ENCODE measurements at regions of chr1 and their contacts with region 1.

Region 1: GRCh38 chr1:201468844-201469511 is at the start of gene PHLDA3:
- DNase-seq: peak; percentile 85
- H3K4me3 ChIP-seq: peak within 1 kb of the TSS; percentile 99
- H3K27ac ChIP-seq: peak within 1 kb of the TSS; percentile 75
- H3K27me3 ChIP-seq: no peaks in the 10 kb centered on the region
- CTCF ChIP-seq: no peak
- polyA plus RNA-seq, gene PHLDA3: 58.9 and 73.9 TPM in 2 replicates

Region 2: DNA sequence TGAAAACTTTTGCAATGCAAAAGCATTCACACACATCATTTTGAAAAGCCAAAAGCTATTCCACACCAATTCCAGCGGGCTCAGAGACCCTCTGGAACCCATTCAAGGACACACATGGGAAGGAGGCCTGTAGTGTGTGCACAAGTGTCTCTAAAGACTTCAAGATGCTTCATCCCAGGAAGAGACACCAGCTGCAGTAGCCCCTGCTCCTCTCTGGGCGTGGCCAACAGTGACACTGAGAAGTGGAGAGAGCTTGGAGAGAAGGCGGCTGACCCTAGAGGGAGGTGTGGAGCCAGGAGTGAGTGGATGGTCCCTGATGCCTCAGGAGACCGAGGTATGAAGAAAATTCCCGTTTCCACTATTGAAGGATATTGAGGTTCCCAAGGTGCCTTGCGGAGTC is 32.6 kb before region 1 on chr1:
- CTCF ChIA-PET with region 1: interaction called, 4 read pairs
- POLR2A ChIA-PET with region 1: interaction called, 18 read pairs
- DNase-seq: no peak
- H3K4me3 ChIP-seq: no peak overlapping the region
- H3K27ac ChIP-seq: no peak overlapping the region
- H3K27me3 ChIP-seq: peaks cover 4% of the 10 kb centered on the region
- CTCF ChIP-seq: peak; percentile 36

Region 3: GRCh38 chr1:201447911-201448871 is 20.8 kb before region 1 on chr1:
- CTCF ChIA-PET with region 1: interaction called, 14 read pairs
- POLR2A ChIA-PET with region 1: interaction called, 17 read pairs
- DNase-seq: peak; percentile 33
- H3K4me3 ChIP-seq: no peak overlapping the region
- H3K27ac ChIP-seq: no peak overlapping the region
- H3K27me3 ChIP-seq: no peaks in the 10 kb centered on the region
- CTCF ChIP-seq: peak; percentile 82

Region 4: GRCh38 chr1:201456499-201457309 is 12.3 kb before region 1 on chr1:
- CTCF ChIA-PET with region 1: no interaction called
- POLR2A ChIA-PET with region 1: interaction called, 21 read pairs
- DNase-seq: peak; percentile 88
- H3K4me3 ChIP-seq: no peak overlapping the region; the same call in 1 of the 2 replicates
- H3K27ac ChIP-seq: peak overlapping the region; percentile 95
- H3K27me3 ChIP-seq: no peaks in the 10 kb centered on the region
- CTCF ChIP-seq: no peak

Region 5: GRCh38 chr1:201481761-201482493 is 12.9 kb after region 1 on chr1:
- CTCF ChIA-PET with region 1: interaction called, 6 read pairs
- POLR2A ChIA-PET with region 1: interaction called, 36 read pairs
- DNase-seq: no peak
- H3K4me3 ChIP-seq: no peak overlapping the region
- H3K27ac ChIP-seq: no peak overlapping the region
- H3K27me3 ChIP-seq: no peaks in the 10 kb centered on the region
- CTCF ChIP-seq: peak; percentile 82

Region 6: GRCh38 chr1:201488817-201489589 is 20.0 kb after region 1 on chr1:
- CTCF ChIA-PET with region 1: interaction called, 4 read pairs
- POLR2A ChIA-PET with region 1: interaction called, 10 read pairs
- DNase-seq: peak; percentile 78
- H3K4me3 ChIP-seq: no peak overlapping the region
- H3K27ac ChIP-seq: peak overlapping the region; percentile 80
- H3K27me3 ChIP-seq: no peaks in the 10 kb centered on the region
- CTCF ChIP-seq: no peak

Region 7: GRCh38 chr1:201506556-201507359 is 37.8 kb after region 1 on chr1 and contains the start of gene CSRP1:
- CTCF ChIA-PET with region 1: interaction called, 20 read pairs
- POLR2A ChIA-PET with region 1: interaction called, 25 read pairs
- DNase-seq: no peak
- H3K4me3 ChIP-seq: peak within 1 kb of the TSS; percentile 85
- H3K27ac ChIP-seq: peak within 1 kb of the TSS; percentile 99
- H3K27me3 ChIP-seq: no peaks in the 10 kb centered on the region
- CTCF ChIP-seq: no peak
- polyA plus RNA-seq, gene CSRP1: 641 and 730 TPM in 2 replicates